ENCODE measurements at regions of chr20 and their contacts with region 1.

Region 1: GRCh38 chr20:60037120-60037499 is 78.9 kb downstream of the CDH26 start:
- DNase-seq: no peak
- ATAC-seq: no peak

Region 2: GRCh38 chr20:59940174-59940971 is 96.7 kb before region 1 on chr20 and contains the starts of genes FAM217B and PPP1R3D:
- intact Hi-C with region 1: loop called (anchors 10 kb)
- DNase-seq: peak; percentile 99
- ATAC-seq: peak; percentile 95
- total RNA-seq, gene FAM217B: 37.9 TPM
- total RNA-seq, gene PPP1R3D: 12.7 TPM